SK-N-SH (cell line): ENCODE measurements at regions of chr3 and their contacts with region 1.

Region 1: GRCh38 chr3:196609343-196609775 is 30.1 kb upstream of the NRROS start:
- DNase-seq: peak; percentile 92
- H3K4me3 ChIP-seq: no peak overlapping the region; a peak in 1 of 4 replicates
- H3K27ac ChIP-seq: no peak overlapping the region
- H3K4me1 ChIP-seq: peaks cover 7 to 9% of the 10 kb centered on the region in 2 experiments; a peak in 2 of 4 replicates
- H3K27me3 ChIP-seq: no peaks in the 10 kb centered on the region
- CTCF ChIP-seq: peak; percentile 85
- EP300 ChIP-seq: no peak
- RAD21 ChIP-seq: peak; percentile 90

Region 2: DNA sequence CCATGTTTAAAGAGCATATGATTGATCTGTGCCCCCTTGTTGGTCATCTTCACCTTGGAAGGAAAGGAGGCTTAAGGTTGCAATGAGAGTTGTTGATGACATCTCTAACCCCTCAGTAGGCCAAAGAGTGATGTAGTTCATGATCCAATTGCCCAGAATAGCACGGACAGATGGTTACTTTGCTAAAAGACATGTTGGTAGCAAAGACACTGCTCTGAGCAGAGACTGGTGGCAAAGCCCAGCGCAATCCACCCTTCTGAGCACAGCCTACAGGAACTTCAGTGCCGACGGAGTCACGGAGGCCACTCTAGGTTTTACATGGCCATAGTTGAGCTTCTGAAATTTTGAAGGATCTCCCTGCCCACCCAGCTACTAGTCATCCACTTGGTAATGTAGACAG is 19.1 kb before region 1 on chr3:
- CTCF ChIA-PET with region 1: interaction called, 11 read pairs
- POLR2A ChIA-PET with region 1: no interaction called
- DNase-seq: no peak
- H3K4me3 ChIP-seq: no peak overlapping the region
- H3K27ac ChIP-seq: no peak overlapping the region
- H3K4me1 ChIP-seq: peaks cover 0 to 6% of the 10 kb centered on the region in 2 experiments; a peak in 1 of 4 replicates
- H3K27me3 ChIP-seq: no peaks in the 10 kb centered on the region
- CTCF ChIP-seq: no peak
- EP300 ChIP-seq: no peak
- RAD21 ChIP-seq: no peak

Region 3: GRCh38 chr3:196596355-196596754 is 13.0 kb before region 1 on chr3:
- CTCF ChIA-PET with region 1: interaction called, 11 read pairs
- POLR2A ChIA-PET with region 1: no interaction called
- DNase-seq: no peak
- H3K4me3 ChIP-seq: no peak overlapping the region
- H3K27ac ChIP-seq: no peak overlapping the region
- H3K4me1 ChIP-seq: peaks cover 0 to 2% of the 10 kb centered on the region in 2 experiments; a peak in 1 of 4 replicates
- H3K27me3 ChIP-seq: 0 out of 2 replicates have a peak, but pooled peaks cover 4% of the 10 kb centered on the region
- CTCF ChIP-seq: no peak
- EP300 ChIP-seq: no peak
- RAD21 ChIP-seq: no peak

Region 4: DNA sequence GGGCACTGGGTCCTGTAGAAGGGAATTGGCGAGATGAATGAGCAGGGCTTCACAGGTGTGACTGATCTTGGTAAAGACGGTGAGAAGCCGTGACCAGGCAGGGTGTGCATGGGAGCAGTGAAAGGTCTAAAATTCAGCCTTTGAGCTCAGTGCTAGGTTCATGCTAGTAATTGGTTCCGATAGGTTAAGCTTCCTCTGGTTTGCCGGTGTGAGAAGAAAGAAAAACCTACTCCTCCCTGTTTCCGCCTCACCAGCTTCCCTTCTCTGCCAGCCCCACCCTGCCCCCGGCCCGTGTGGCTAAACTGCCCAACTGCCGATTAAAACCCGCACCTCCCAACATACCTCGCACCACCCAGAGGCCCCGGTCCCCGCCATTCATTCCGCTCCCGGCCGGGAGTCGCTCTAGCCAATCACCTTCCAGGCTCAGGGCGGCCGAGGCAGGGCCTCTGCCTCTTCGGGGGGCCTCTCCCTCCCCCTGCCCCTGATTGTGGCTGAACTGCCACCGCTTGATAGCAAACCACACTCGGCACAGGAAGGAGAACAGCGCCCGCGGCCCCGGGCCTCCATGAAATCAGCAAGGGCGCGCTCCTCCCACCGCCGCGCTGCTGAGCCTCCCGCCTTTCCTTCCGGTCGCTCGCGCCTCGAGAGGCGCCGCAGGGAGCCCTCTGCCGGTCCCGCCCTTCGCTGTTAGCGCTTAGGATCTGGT is 22.8 kb after region 1 on chr3:
- CTCF ChIA-PET with region 1: interaction called, 11 read pairs
- POLR2A ChIA-PET with region 1: no interaction called
- DNase-seq: peak; percentile 94
- H3K4me3 ChIP-seq: peak overlapping the region; percentile 56 to 71
- H3K27ac ChIP-seq: peak overlapping the region in 1 of 2 experiments; percentile 73; a peak in 2 of 4 replicates
- H3K4me1 ChIP-seq: peaks cover 0 to 7% of the 10 kb centered on the region in 2 experiments; a peak in 1 of 4 replicates
- H3K27me3 ChIP-seq: no peaks in the 10 kb centered on the region
- CTCF ChIP-seq: peak; percentile 26
- EP300 ChIP-seq: peak in 1 of 2 experiments; percentile 11; a peak in 1 of 4 replicates
- RAD21 ChIP-seq: peak; percentile 21; the same call in 1 of the 2 replicates

Region 5: DNA sequence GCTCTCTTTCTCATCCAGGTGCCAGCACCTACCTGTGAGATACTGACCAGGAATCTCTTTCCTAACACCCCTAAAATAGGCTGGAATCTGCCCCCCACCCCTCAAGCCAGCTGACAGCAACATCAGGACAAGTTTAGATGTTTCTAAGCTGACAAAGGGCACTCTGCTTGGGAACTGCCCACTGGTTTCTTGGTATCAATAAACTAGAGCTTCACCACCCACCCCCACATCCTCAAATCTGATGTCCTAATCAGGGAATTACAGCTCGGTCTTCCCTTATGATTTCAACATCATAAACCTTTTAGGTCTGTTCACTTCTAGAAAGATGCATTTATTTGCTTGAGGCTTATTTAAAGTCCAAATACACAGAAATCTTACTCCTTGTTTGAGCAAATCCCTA is 68.0 kb after region 1 on chr3:
- CTCF ChIA-PET with region 1: interaction called, 18 read pairs
- POLR2A ChIA-PET with region 1: no interaction called
- DNase-seq: no peak
- H3K4me3 ChIP-seq: no peak overlapping the region
- H3K27ac ChIP-seq: no peak overlapping the region
- H3K4me1 ChIP-seq: no peaks in the 10 kb centered on the region
- H3K27me3 ChIP-seq: no peaks in the 10 kb centered on the region; the same call in 1 of the 2 replicates
- CTCF ChIP-seq: no peak
- EP300 ChIP-seq: no peak
- RAD21 ChIP-seq: no peak